ENCODE measurements at regions of chr3 and their contacts with region 1.

Region 1: DNA sequence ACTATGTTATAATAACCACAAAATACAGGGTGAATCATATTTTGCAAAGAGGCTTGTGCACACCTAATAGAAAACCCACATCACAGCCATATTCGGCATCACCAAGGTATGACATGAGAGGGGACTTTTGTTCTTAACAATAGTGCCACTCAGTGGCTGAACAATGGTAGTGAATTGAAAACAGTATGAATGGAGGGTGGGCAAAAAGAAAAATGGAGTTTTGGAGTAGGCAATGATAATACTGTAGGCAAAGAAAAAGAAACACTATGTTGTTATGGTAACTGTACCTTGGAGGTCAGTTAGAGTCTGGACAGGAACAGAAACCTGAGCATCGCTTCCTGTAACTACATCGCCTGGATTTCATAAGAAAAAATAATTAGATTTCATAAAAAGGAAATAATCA is 348.6 kb downstream of the PLCL2 start:
- DNase-seq: peak; percentile 39 to 67 (median 52)
- ATAC-seq: peak; percentile 94
- H3K4me3 ChIP-seq: no peak overlapping the region
- H3K27ac ChIP-seq: no peak overlapping the region
- H3K4me1 ChIP-seq: no peaks in the 10 kb centered on the region
- H3K27me3 ChIP-seq: no peaks in the 10 kb centered on the region
- CTCF ChIP-seq: peak; percentile 68 to 83 (median 73)
- EP300 ChIP-seq: no peak
- POLR2A ChIP-seq: no peak
- RAD21 ChIP-seq: peak; percentile 86 to 91

Region 2: DNA sequence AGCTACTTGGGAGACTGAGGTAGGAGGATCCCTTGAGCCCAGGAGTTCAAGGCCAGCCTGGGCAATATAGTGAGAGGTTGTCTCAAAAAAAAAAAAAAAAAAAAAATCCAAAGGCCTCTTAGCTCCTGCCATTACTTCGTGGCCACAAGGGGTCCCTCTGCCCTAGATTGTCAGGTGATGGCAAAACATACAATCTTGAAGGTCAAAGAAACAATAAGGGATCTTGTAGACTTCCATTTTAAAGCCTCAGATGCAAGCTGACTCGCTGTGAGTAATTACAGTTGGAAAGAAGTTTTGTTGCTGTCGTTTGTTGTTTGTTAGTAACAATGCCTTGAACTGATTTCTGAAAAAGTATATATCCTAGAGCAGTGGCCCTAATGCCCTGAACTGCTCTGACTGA is 404.6 kb before region 1 on chr3:
- CTCF ChIA-PET with region 1: interaction called, 5 read pairs
- POLR2A ChIA-PET with region 1: no interaction called
- in situ Hi-C with region 1: no loop called
- intact Hi-C with region 1: loop called (anchors 1 kb)
- DNase-seq: peak; percentile 18 to 41 (median 27)
- ATAC-seq: peak; percentile 82
- H3K4me3 ChIP-seq: no peak overlapping the region
- H3K27ac ChIP-seq: no peak overlapping the region
- H3K4me1 ChIP-seq: no peaks in the 10 kb centered on the region
- H3K27me3 ChIP-seq: no peaks in the 10 kb centered on the region
- CTCF ChIP-seq: peak; percentile 51 to 67 (median 58)
- EP300 ChIP-seq: no peak
- POLR2A ChIP-seq: no peak
- RAD21 ChIP-seq: peak in 1 of 2 experiments; percentile 50; a peak in 3 of 4 replicates

Region 3: GRCh38 chr3:16923112-16923511 is 310.3 kb before region 1 on chr3:
- CTCF ChIA-PET with region 1: no interaction called
- POLR2A ChIA-PET with region 1: no interaction called
- in situ Hi-C with region 1: no loop called
- intact Hi-C with region 1: loop called (anchors 5 kb)
- DNase-seq: no peak
- ATAC-seq: no peak
- H3K4me3 ChIP-seq: no peak overlapping the region
- H3K27ac ChIP-seq: no peak overlapping the region
- H3K4me1 ChIP-seq: no peaks in the 10 kb centered on the region
- H3K27me3 ChIP-seq: peaks cover 2 to 4% of the 10 kb centered on the region in 2 experiments; a peak in 3 of 5 replicates
- CTCF ChIP-seq: no peak
- EP300 ChIP-seq: no peak
- POLR2A ChIP-seq: no peak
- RAD21 ChIP-seq: no peak

Region 4: GRCh38 chr3:17032407-17033034 is 200.9 kb before region 1 on chr3:
- CTCF ChIA-PET with region 1: interaction called, 3 read pairs
- POLR2A ChIA-PET with region 1: interaction called, 3 read pairs
- in situ Hi-C with region 1: no loop called
- intact Hi-C with region 1: loop called (anchors 5 kb)
- DNase-seq: peak; percentile 19 to 47 (median 32)
- ATAC-seq: peak; percentile 92
- H3K4me3 ChIP-seq: no peak overlapping the region
- H3K27ac ChIP-seq: no peak overlapping the region
- H3K4me1 ChIP-seq: no peaks in the 10 kb centered on the region
- H3K27me3 ChIP-seq: peaks cover 0 to 11% of the 10 kb centered on the region in 2 experiments; a peak in 3 of 5 replicates
- CTCF ChIP-seq: peak; percentile 35 to 70 (median 70)
- EP300 ChIP-seq: no peak
- POLR2A ChIP-seq: no peak
- RAD21 ChIP-seq: peak; percentile 64 to 76

Region 5: DNA sequence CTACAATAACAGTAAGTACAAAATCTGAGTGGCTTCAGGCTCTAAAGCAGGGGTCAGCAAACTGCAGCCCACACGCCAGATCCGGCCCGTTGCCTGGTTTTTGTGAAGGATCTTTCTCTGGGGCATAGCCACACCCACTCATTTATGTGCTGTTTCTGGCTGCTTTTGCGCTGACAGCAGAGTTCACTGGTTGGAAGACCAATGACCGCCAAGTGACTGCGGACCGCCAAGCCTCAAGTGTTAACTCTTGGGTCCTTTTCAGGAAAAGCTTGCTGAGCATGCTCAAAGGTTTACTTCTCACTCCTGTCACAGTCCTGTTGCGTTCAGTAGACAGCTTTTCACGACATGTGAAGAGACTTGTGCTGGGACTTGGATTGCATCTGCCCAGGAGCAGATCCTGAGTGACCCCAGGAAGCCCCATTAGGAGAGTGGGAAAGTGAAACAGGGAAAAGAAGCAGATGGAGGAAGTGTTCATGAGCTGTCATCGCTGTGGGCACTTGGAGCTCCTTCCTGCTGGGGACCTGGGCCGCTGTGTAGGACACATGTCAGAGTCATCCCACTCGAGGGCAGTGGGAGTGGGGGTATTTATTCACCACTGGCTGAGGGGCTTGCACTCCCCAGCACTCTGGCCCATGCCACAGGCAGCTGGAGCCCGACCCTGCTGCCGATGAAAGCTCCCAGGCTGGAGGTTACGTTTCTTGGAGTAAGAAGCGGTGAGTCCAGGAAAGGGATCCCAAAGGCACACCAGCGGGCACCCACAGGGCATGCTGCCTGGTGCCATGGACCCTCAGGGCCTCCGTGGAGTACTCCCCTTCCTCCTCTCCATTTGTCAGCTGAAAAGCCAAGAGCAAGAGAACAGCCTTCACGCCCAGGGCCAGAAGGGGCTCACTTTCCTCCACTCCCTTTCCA is 99.5 kb before region 1 on chr3:
- CTCF ChIA-PET with region 1: no interaction called
- POLR2A ChIA-PET with region 1: no interaction called
- in situ Hi-C with region 1: no loop called
- intact Hi-C with region 1: no loop called
- DNase-seq: no peak
- ATAC-seq: 0 out of 3 replicates have a peak, but pooled peaks have one; percentile 28
- H3K4me3 ChIP-seq: no peak overlapping the region
- H3K27ac ChIP-seq: no peak overlapping the region
- H3K4me1 ChIP-seq: no peaks in the 10 kb centered on the region
- H3K27me3 ChIP-seq: peaks cover 11 to 56% of the 10 kb centered on the region in 2 experiments
- CTCF ChIP-seq: no peak
- EP300 ChIP-seq: no peak
- POLR2A ChIP-seq: no peak
- RAD21 ChIP-seq: no peak

Region 6: DNA sequence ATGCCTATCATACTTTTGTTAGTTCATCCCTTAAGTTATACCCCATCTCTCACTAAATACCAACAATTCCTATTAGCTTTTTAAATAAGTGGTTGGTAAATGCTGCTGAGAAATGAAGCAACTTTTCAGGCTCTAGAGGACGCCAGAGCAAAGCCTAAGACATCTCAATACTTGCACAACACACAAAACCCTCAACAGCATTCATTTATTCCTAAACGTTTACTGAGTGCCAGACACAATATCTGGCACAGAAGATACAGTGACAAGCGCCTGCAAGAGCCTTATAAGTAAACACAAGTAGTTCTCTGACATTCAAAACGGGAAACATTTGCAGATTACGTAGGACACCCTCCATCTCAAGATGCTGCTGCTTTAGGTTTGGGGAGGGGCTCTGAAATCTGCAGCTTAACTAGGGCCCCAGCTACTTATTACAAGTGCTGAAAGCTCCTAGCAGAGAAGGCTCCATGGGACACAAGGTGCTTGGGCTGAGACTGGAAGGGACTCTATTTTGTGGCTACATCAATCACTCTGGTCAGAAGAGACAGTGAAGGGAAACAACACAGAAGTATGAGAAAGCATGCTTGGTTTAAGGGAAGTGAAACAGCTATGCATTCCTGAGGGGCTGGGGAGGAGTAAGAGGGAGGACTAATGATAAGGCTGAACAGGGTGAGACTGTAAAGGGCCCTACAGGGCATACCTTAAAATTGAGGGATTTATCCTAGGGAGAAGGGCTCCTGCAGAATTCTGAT is 37.4 kb before region 1 on chr3:
- CTCF ChIA-PET with region 1: no interaction called
- POLR2A ChIA-PET with region 1: interaction called, 3 read pairs
- in situ Hi-C with region 1: no loop called
- intact Hi-C with region 1: loop called (anchors 1 kb)
- DNase-seq: no peak
- ATAC-seq: peak; percentile 51
- H3K4me3 ChIP-seq: no peak overlapping the region
- H3K27ac ChIP-seq: no peak overlapping the region
- H3K4me1 ChIP-seq: no peaks in the 10 kb centered on the region
- H3K27me3 ChIP-seq: no peaks in the 10 kb centered on the region
- CTCF ChIP-seq: peak in 2 of 3 experiments; percentile 11 to 27; a peak in 2 of 6 replicates
- EP300 ChIP-seq: no peak
- POLR2A ChIP-seq: no peak
- RAD21 ChIP-seq: peak; percentile 5 to 48; a peak in 2 of 4 replicates

Measured in K562 (cell line).